CD4-positive, alpha-beta T cell (primary cell): ENCODE measurements at regions of chr3 and their contacts with region 1.

Region 1: DNA sequence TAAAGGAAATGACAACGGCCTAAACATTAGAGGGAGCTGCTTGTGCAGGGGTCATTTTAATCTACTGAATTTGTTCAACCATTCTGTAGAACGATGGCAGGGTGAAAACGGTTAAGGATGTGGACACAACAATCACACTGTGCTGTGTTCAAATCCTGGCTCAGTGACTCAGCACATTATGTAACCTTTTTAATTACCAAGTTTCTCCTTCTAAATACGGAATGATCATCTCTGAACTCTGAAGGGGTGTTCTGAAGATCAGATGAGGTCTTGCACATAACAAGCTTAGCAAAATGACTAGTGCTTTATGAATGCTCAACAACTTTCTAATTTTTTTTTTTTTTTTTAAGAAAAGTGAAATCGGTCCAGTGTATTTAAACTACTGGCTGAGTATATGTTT is 592.8 kb downstream of the FOXP1 start:
- DNase-seq: no peak
- ATAC-seq: peak; percentile 18
- H3K4me3 ChIP-seq: no peak overlapping the region
- H3K4me3 Mint-ChIP-seq: no peak overlapping the region
- H3K27ac ChIP-seq: peak overlapping the region; percentile 8 to 30
- H3K27ac Mint-ChIP-seq: peak overlapping the region; percentile 89
- H3K4me1 ChIP-seq: peaks cover 23% of the 10 kb centered on the region
- H3K4me1 Mint-ChIP-seq: peaks cover 93% of the 10 kb centered on the region
- H3K27me3 ChIP-seq: no peaks in the 10 kb centered on the region
- H3K27me3 Mint-ChIP-seq: no peaks in the 10 kb centered on the region
- CTCF ChIP-seq: no peak

Region 2: DNA sequence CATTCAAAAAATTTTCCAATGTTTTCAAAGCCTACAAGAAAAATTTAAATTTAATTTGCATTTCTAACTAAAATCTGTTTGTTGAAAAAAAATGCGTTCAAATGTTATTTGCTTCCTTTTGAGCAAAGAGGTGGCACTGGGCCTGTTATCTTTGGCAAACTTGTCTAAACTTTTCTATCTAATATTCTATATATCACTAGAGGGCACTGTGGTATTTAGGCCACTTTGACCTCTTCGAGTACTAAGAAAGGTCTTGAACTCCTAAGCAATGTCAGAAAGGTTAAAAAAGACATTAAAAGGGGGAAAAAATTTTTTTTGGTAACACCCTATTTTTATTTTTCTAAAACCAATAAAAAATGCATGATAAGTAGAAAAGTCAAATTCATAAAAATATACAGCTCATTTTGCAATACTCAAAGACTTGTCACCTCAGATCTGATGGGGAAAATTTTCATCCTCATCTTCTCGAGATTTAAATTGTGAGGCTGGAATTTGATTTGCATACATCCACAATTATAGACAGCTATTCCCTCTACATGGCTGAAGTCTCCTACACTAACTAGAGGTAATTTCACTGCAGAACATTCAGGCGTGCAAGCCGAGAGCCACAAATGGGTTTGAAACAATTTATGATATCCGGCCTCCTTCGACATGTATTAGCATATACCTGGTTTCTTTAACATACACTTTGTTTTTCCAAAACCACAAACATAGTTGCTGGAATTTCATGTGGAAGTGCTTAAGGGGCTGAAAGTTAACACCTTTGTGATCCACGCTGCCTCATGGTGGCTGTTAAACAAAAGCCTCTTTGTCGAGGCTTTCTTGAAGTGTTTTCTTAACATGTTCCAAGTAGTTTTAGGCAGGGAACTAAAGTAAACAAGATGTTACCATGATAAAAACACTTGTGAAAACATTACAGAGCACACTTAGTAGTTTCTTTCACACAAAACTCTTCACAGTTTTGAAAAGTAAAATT is 16.4 kb after region 1 on chr3:
- CTCF ChIA-PET with region 1: interaction called, 4 read pairs
- POLR2A ChIA-PET with region 1: interaction called, 3 read pairs
- intact Hi-C with region 1: loop called in 1 of 2 experiments (anchors 2 kb)
- DNase-seq: peak in 3 of 14 experiments; percentile 61 to 66 (median 63)
- ATAC-seq: no peak
- H3K4me3 ChIP-seq: no peak overlapping the region
- H3K4me3 Mint-ChIP-seq: peak overlapping the region; percentile 22
- H3K27ac ChIP-seq: no peak overlapping the region
- H3K27ac Mint-ChIP-seq: peak overlapping the region; percentile 96
- H3K4me1 ChIP-seq: peaks cover 38% of the 10 kb centered on the region
- H3K4me1 Mint-ChIP-seq: peaks cover 83% of the 10 kb centered on the region
- H3K27me3 ChIP-seq: no peaks in the 10 kb centered on the region
- H3K27me3 Mint-ChIP-seq: no peaks in the 10 kb centered on the region
- CTCF ChIP-seq: peak; percentile 76